ENCODE measurements at regions of chr20 and their contacts with region 1.

Region 1: DNA sequence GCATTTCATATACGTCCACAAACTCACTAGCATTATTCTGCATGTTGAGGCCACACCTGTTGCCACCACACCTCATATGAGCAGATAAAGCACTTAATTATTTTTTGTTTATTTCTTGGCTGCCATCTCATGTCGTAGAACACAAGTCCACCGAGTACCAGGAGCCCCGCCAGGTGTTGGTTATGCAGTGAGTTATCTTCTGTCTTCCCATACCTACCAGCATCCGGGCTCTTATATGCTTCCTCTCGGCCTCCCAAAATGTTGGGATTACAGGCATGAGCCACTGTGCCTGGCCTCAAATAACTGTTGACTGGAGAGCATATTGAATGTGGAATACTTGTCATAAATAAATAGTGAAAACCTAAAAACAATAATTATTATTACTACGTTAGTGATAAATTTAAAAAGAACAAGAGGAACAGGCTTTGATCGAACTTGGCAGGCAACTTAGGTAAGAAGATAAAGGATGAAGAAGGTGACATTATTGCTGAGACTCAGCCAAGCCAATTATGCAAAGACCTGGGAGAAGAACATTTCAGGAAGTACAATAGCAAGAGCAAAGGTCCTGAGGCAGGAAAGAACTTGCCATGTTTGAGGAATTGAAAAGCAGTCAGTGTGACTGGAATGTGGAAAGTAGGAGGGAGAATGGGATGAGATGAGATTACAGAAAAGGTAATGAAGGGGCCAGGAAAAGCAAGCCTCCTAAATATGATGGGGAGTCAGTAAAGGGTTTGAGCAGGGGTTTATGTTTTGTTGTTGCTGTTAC is 12.6 kb upstream of the SLC23A2 start:
- DNase-seq: no peak
- H3K4me3 ChIP-seq: no peak overlapping the region
- H3K27ac ChIP-seq: no peak overlapping the region
- H3K27me3 ChIP-seq: no peaks in the 10 kb centered on the region
- CTCF ChIP-seq: no peak

Region 2: DNA sequence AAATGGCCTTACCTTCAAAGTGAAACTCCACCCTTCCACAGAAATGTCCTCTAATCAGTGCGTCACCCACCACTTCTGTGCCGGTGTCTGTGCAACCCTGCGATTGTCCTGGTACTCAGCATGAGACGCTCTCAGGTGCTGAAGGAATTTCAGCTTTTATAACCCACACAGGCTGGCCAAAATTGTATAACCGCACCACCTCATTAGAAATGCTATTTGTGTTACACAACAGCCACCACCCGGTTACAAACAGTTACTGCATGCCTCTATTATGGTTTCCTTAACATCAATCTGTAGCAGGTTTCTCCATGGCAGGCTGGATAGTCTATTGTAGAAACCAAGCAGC is 64.1 kb before region 1 on chr20:
- intact Hi-C with region 1: no loop called
- DNase-seq: peak in 3 of 10 donors; percentile 35 to 52 (median 48)
- H3K4me3 ChIP-seq: peak overlapping the region in 54 of 59 donors; percentile 2 to 56 (median 35)
- H3K27ac ChIP-seq: peak overlapping the region in 57 of 59 donors; percentile 42 to 92 (median 82)
- H3K27me3 ChIP-seq: no peaks in the 10 kb centered on the region
- CTCF ChIP-seq: peak; percentile 39 to 85 (median 71)

Region 3: DNA sequence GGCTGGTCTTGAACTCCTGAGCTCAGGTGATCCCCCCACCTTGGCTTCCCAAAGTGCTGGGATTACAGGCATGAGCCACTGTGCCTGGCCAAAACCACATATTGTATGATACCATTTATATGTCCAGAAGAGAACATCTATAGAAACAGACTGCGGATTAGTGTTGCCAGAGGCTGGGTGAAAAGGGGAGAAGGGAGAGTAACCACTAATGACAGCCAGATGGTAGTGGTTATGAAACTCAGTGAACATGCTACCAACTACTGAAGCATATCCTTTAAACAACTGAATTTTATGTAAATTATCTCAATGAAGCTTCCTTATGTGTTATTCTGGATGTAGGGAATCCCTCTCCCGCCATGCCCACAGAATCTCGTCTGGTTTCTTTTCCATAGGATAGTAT is 28.2 kb before region 1 on chr20:
- intact Hi-C with region 1: loop called in 1 of 2 experiments (anchors 2 kb)
- DNase-seq: peak in 1 of 10 donors; percentile 25
- H3K4me3 ChIP-seq: no peak overlapping the region
- H3K27ac ChIP-seq: peak overlapping the region in 1 of 59 donors; percentile 29
- H3K27me3 ChIP-seq: no peaks in the 10 kb centered on the region
- CTCF ChIP-seq: no peak

Measured in dorsolateral prefrontal cortex (tissue), 120 donors.